Vagina (tissue), 2 donors: ENCODE measurements at regions of chr10 and their contacts with region 1.

Region 1: GRCh38 chr10:122435212-122435827 is 19.1 kb upstream of the ARMS2 start:
- DNase-seq: no peak
- H3K4me3 ChIP-seq: no peak overlapping the region
- H3K27ac ChIP-seq: no peak overlapping the region
- H3K4me1 ChIP-seq: no peaks in the 10 kb centered on the region
- H3K27me3 ChIP-seq: no peaks in the 10 kb centered on the region
- CTCF ChIP-seq: peak; percentile 45 to 71 (median 57)
- POLR2A ChIP-seq: no peak

Region 2: GRCh38 chr10:122298598-122299301 is 136.6 kb before region 1 on chr10:
- intact Hi-C with region 1: loop called (anchors 5 kb)
- DNase-seq: peak in 1 of 2 donors; percentile 85
- H3K4me3 ChIP-seq: no peak overlapping the region
- H3K27ac ChIP-seq: no peak overlapping the region
- H3K4me1 ChIP-seq: no peaks in the 10 kb centered on the region
- H3K27me3 ChIP-seq: no peaks in the 10 kb centered on the region
- CTCF ChIP-seq: peak; percentile 85 to 94 (median 93)
- POLR2A ChIP-seq: no peak

Region 3: GRCh38 chr10:122551450-122551849 is 116.1 kb after region 1 on chr10:
- intact Hi-C with region 1: no loop called
- DNase-seq: no peak
- H3K4me3 ChIP-seq: no peak overlapping the region
- H3K27ac ChIP-seq: no peak overlapping the region
- H3K4me1 ChIP-seq: no peaks in the 10 kb centered on the region
- H3K27me3 ChIP-seq: no peaks in the 10 kb centered on the region
- CTCF ChIP-seq: no peak
- POLR2A ChIP-seq: no peak

Region 4: GRCh38 chr10:122702275-122702674 is 267.0 kb after region 1 on chr10:
- intact Hi-C with region 1: no loop called
- DNase-seq: no peak
- H3K4me3 ChIP-seq: no peak overlapping the region
- H3K27ac ChIP-seq: no peak overlapping the region
- H3K4me1 ChIP-seq: no peaks in the 10 kb centered on the region
- H3K27me3 ChIP-seq: no peaks in the 10 kb centered on the region
- CTCF ChIP-seq: no peak
- POLR2A ChIP-seq: no peak

Region 5: GRCh38 chr10:123847682-123848432 is 1412.5 kb after region 1 on chr10:
- intact Hi-C with region 1: no loop called
- DNase-seq: peak in 1 of 2 donors; percentile 1
- H3K4me3 ChIP-seq: no peak overlapping the region
- H3K27ac ChIP-seq: no peak overlapping the region
- H3K4me1 ChIP-seq: peaks cover 13% of the 10 kb centered on the region
- H3K27me3 ChIP-seq: no peaks in the 10 kb centered on the region
- CTCF ChIP-seq: no peak
- POLR2A ChIP-seq: no peak